ENCODE measurements at regions of chr13 and their contacts with region 1.

Region 1: GRCh38 chr13:34941835-34942731 is at the start of gene NBEA:
- DNase-seq: peak; percentile 63
- H3K4me3 Mint-ChIP-seq: peak within 1 kb of the TSS; percentile 90
- H3K27ac Mint-ChIP-seq: peak within 1 kb of the TSS; percentile 68
- H3K4me1 Mint-ChIP-seq: peaks cover 18% of the 10 kb centered on the region
- H3K27me3 Mint-ChIP-seq: peaks cover 49% of the 10 kb centered on the region
- total RNA-seq, gene NBEA: 0.15 and 0.18 TPM in 2 replicates

Region 2: DNA sequence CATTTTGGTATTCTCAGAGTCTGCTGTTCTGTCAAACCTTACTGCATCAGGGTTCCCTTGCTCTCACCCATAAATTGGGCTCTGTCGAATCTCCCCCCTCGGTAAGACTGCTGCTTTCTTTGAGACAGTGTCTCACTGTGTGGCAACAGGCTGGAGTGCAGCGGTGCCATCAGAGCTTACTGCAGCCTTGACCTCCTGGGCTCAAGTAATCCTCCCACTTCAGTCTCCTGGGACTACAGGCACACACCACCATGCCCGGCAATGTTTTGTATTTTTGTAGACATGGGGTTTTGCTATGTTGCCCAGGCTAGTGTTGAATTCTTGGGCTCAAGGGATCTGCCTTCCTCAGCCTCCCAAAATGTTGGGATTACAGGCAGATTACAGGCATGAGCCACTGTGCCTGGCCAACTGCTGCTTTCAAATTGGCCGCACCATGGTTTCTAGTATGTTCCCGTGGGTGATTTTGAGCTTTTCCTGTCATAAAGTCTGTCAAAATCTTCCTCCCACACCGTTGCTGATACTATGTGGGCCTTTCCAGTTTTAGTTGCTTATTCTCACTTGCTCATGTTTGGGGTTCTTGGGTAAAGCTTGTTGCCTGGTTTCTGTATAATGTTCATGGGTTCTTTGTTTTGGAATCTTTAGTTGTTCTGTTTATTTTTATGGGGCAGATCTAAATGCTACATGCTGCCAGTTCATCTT is 1113.5 kb before region 1 on chr13:
- intact Hi-C with region 1: loop called (anchors 10 kb)
- DNase-seq: no peak
- H3K4me3 Mint-ChIP-seq: no peak overlapping the region
- H3K27ac Mint-ChIP-seq: peak overlapping the region; percentile 80
- H3K4me1 Mint-ChIP-seq: peaks cover 31% of the 10 kb centered on the region
- H3K27me3 Mint-ChIP-seq: no peaks in the 10 kb centered on the region

Region 3: GRCh38 chr13:34265016-34265692 is 676.9 kb before region 1 on chr13:
- intact Hi-C with region 1: no loop called
- DNase-seq: no peak
- H3K4me3 Mint-ChIP-seq: no peak overlapping the region
- H3K27ac Mint-ChIP-seq: no peak overlapping the region
- H3K4me1 Mint-ChIP-seq: no peaks in the 10 kb centered on the region
- H3K27me3 Mint-ChIP-seq: no peaks in the 10 kb centered on the region

Region 4: GRCh38 chr13:35157143-35157755 is 215.2 kb after region 1 on chr13:
- intact Hi-C with region 1: loop called (anchors 1 kb)
- DNase-seq: no peak
- H3K4me3 Mint-ChIP-seq: no peak overlapping the region
- H3K27ac Mint-ChIP-seq: no peak overlapping the region
- H3K4me1 Mint-ChIP-seq: peaks cover 12% of the 10 kb centered on the region
- H3K27me3 Mint-ChIP-seq: no peaks in the 10 kb centered on the region

Region 5: GRCh38 chr13:35475960-35476943 is 534.2 kb after region 1 on chr13 and contains the start of gene MAB21L1:
- intact Hi-C with region 1: loop called (anchors 10 kb)
- DNase-seq: no peak
- H3K4me3 Mint-ChIP-seq: peak within 1 kb of the TSS; percentile 81
- H3K27ac Mint-ChIP-seq: no peak within 1 kb of the TSS
- H3K4me1 Mint-ChIP-seq: peaks cover 33% of the 10 kb centered on the region
- H3K27me3 Mint-ChIP-seq: peaks cover 78% of the 10 kb centered on the region
- total RNA-seq, gene MAB21L1: not detected in 2 replicates